ENCODE measurements at regions of chr17 and their contacts with region 1.

Region 1: GRCh38 chr17:39653662-39654331 is 11.4 kb upstream of the TCAP start:
- DNase-seq: no peak
- H3K4me3 ChIP-seq: no peak overlapping the region
- H3K27me3 ChIP-seq: no peaks in the 10 kb centered on the region
- CTCF ChIP-seq: peak; percentile 90

Region 2: DNA sequence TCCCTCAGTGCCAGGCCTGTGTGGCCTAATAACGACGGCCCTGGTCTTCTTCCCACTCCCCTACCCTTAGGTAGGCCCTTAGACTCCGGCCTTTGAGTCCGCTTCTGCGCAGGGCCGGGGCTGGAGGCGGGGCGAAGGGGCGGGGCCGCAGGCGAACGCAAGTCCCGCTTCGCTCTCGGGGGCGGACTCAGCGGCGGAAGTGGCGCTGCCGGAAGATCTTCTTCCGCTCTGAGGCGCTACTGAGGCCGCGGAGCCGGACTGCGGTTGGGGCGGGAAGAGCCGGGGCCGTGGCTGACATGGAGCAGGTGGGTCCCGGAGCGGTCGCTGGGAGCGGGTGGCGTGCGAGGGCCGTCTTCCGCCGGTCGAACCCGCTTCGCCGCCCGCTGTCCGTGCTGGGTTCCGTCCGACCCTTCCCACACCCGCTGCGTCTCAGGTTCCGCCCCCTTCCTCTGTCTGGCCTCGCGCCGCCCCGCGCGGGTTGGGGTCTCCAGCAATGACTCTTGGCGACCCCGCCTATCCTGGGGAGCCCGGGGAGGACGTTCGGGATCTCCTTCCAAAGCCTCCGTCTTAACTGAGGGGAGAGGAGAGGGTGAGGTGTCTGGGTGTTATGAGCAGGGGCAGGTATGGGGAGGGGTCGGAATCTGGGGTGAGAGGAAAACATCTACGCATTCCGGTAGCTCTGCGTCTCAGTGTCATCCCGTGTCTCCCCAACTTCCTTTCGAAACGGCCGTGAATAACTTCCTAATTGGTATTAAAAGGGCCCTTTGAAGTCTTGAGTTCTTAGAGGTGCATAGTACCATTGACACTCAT is 16.7 kb before region 1 on chr17 and contains the start of gene STARD3:
- CTCF ChIA-PET with region 1: interaction called, 59 read pairs
- POLR2A ChIA-PET with region 1: no interaction called
- DNase-seq: no peak
- H3K4me3 ChIP-seq: peak within 1 kb of the TSS; percentile 84
- H3K27me3 ChIP-seq: peaks cover 6% of the 10 kb centered on the region
- CTCF ChIP-seq: peak; percentile 38
- polyA plus RNA-seq, gene STARD3: 51.6 and 93.8 TPM in 2 replicates

Region 3: GRCh38 chr17:39668199-39668966 is 14.6 kb after region 1 on chr17 and contains the start of gene PNMT:
- CTCF ChIA-PET with region 1: interaction called, 45 read pairs
- POLR2A ChIA-PET with region 1: no interaction called
- DNase-seq: no peak
- H3K4me3 ChIP-seq: no peak within 1 kb of the TSS
- H3K27me3 ChIP-seq: peaks cover 19% of the 10 kb centered on the region
- CTCF ChIP-seq: peak; percentile 66
- polyA plus RNA-seq, gene PNMT: not detected in 2 replicates

Measured in BJ (cell line).